PC-9 (cell line): ENCODE measurements at regions of chr3 and their contacts with region 1.

Region 1: GRCh38 chr3:180912304-180913296 is at the start of gene FXR1:
- DNase-seq: peak; percentile 90 to 97
- H3K4me3 ChIP-seq: peak within 1 kb of the TSS; percentile 63
- H3K27ac ChIP-seq: peak within 1 kb of the TSS; percentile 64
- H3K4me1 ChIP-seq: peaks cover 21% of the 10 kb centered on the region
- H3K27me3 ChIP-seq: no peaks in the 10 kb centered on the region
- CTCF ChIP-seq: peak; percentile 69
- total RNA-seq, gene FXR1: 236 and 288 TPM in 2 replicates

Region 2: DNA sequence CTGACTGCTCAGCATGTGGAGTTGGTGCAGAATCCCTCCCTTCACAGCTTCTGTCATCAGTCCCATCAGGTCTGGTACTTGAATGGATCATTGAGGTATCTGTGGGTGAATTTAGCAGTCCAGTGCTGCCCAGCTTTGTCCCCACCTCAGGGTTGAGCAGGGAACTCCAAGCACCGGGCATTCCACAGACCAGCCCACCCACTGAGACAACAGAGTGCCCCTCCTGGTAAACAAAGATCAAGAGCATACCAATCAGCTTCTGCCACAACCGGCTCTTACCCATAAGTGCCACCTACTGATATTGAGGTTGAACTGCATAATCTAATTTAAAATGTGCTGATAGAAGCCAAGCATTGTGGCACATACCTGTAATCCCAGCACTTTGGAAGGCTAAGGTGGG is 57.2 kb before region 1 on chr3:
- CTCF ChIA-PET with region 1: no interaction called
- POLR2A ChIA-PET with region 1: interaction called, 32 read pairs
- intact Hi-C with region 1: no loop called
- DNase-seq: no peak
- H3K4me3 ChIP-seq: no peak overlapping the region
- H3K27ac ChIP-seq: no peak overlapping the region
- H3K4me1 ChIP-seq: no peaks in the 10 kb centered on the region
- H3K27me3 ChIP-seq: no peaks in the 10 kb centered on the region
- CTCF ChIP-seq: peak; percentile 60

Region 3: DNA sequence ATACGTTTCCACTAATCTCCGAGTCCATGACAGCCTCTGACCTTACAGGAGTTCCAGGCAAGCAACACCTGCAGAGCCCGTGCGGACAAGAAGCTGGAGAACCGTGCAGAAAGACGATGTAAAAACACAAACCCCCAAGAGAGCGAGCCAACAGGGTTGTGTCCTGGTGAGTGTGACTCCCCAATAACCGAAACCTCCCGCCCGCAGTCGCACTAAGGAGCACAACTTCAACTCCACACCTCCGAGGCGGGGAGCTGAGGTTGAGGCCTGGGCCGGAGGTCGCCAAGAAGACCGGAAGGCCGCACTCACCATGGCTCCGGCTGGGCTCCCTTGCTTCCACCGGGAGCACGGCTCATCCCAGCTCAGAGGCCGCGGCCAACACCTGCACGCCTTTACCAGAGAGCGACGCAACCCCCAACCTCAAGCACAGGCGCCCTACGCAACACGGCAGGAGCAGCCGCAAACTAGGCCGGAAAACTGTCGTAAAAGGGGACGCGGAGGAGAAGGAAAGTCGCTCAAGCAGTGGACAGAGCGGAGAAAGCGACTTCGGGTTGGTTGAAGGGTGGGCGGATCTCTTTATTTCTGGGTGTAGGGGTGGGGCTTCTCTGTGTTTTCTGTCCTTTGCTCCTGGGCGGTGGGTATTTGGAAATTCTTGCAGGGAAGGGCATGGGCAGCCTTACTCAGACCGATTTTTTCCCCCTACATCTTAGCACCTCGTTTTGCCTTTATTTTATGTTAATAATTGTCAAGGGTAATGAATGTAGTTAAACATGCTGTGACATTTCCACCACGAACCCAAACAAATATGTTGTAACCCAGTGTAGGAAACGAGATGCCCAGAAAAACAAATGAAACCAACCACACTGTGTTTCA is 76.9 kb after region 1 on chr3 and contains the start of gene DNAJC19:
- CTCF ChIA-PET with region 1: no interaction called
- POLR2A ChIA-PET with region 1: interaction called, 4 read pairs
- intact Hi-C with region 1: loop called (anchors 1 kb)
- DNase-seq: peak; percentile 95 to 98
- H3K4me3 ChIP-seq: peak within 1 kb of the TSS; percentile 76
- H3K27ac ChIP-seq: peak within 1 kb of the TSS; percentile 68
- H3K4me1 ChIP-seq: peaks cover 16% of the 10 kb centered on the region
- H3K27me3 ChIP-seq: no peaks in the 10 kb centered on the region
- CTCF ChIP-seq: no peak
- total RNA-seq, gene DNAJC19: 85.6 and 86.9 TPM in 2 replicates

Region 4: DNA sequence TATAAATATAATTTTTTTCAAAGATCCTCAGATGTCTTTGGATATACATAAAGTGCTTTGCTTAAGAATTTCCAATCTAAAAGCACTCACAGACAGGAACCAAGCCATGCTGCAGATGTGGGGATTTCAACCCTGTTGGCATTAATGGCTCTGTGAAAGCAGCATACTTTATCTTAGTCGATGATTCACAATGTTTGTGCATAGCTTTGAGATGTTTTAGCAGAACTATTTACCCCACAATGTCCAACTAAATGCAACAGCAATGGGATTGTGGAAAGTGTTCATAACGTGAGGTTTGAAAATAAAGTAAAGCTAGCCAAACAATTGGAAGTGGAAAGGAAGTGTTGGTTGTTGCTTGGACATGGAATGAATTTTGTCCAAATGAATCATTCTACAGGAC is 1170.5 kb after region 1 on chr3:
- CTCF ChIA-PET with region 1: interaction called, 14 read pairs
- POLR2A ChIA-PET with region 1: no interaction called
- intact Hi-C with region 1: no loop called
- DNase-seq: peak in 1 of 2 experiments; percentile 46
- H3K4me3 ChIP-seq: no peak overlapping the region
- H3K27ac ChIP-seq: no peak overlapping the region
- H3K4me1 ChIP-seq: no peaks in the 10 kb centered on the region
- H3K27me3 ChIP-seq: no peaks in the 10 kb centered on the region
- CTCF ChIP-seq: no peak